GM12878 (cell line): ENCODE measurements at regions of chr3 and their contacts with region 1.

Region 1: DNA sequence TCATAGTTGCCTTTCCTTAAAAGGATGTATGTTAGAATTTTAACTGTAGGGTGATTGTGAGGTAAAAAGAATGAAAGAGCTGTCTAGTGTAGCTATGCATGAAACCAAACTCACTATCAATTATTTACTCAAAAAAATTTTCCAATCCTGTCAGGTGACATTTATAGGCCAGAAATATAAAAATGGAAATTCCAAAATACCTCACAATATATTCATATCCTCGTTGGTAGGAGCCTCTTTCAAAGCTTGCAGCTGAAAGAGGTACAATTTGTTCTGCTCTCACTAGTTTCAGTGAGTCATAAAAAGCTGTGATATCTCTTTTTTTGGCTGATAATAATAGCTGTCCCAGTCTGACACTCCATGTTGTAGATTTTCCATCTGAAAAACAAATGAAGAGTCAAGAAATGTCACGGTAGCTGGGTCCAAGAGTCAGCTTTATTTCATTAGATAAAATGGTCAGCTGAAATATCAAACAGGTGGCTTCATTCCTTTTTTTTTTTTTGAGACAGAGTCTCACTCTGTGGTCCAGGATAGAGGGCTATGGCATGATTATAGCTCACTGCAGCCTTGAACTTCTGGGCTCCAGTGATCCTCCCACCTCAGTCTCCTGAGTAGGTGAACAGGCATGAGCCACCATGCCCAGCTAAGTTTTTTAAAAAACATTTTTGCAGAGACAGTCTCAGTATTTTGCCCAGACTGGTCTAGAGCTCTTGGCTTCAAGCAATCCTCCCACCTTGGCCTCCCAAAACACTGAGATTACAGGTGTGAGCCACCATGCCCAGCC is 50.8 kb upstream of the XRN1 start:
- DNase-seq: no peak
- ATAC-seq: peak; percentile 84
- H3K4me3 ChIP-seq: no peak overlapping the region
- H3K27ac ChIP-seq: no peak overlapping the region
- H3K4me1 ChIP-seq: no peaks in the 10 kb centered on the region
- H3K27me3 ChIP-seq: no peaks in the 10 kb centered on the region
- CTCF ChIP-seq: no peak
- EP300 ChIP-seq: no peak
- POLR2A ChIP-seq: no peak
- RAD21 ChIP-seq: no peak

Region 2: DNA sequence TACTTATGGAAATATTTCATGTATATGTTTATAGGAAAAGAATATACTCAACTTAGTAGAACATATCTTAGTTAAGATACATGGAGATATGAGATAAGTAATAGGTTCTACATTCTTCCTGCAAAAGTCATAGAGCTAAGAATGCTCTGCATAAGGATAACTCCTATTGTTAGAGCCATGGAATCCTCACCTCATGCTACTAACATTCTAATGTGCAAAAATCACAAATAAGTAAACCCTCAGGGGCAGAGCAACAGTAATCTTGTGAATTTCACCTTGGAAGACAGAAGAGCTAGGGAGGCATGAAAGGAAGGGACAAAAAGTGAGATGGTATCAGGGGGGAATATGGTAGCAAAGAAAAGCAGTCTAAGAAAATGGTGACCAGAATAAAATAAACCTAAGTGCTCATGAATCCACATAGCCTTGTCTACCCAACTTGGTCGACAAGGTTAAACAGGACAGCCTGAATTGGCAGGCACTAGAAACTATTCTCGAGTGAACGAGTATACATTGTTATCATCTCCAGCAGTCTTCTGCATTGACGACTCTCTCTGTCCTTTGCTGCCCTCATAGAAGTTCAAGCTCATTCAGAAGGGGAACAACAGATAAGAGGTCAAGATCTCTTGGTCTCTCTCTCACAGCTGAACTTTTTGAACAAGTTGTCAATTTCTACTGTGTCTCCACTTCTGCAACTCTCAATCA is 103.5 kb before region 1 on chr3:
- CTCF ChIA-PET with region 1: no interaction called
- POLR2A ChIA-PET with region 1: no interaction called
- RAD21 ChIA-PET with region 1: no interaction called
- SMC1A ChIA-PET with region 1: no interaction called
- in situ Hi-C with region 1: no loop called
- intact Hi-C with region 1: no loop called
- DNase-seq: no peak
- ATAC-seq: no peak
- H3K4me3 ChIP-seq: no peak overlapping the region
- H3K27ac ChIP-seq: no peak overlapping the region
- H3K4me1 ChIP-seq: no peaks in the 10 kb centered on the region
- H3K27me3 ChIP-seq: no peaks in the 10 kb centered on the region
- CTCF ChIP-seq: no peak
- EP300 ChIP-seq: no peak
- POLR2A ChIP-seq: no peak
- RAD21 ChIP-seq: no peak

Region 3: GRCh38 chr3:142509079-142509478 is 10.5 kb after region 1 on chr3:
- CTCF ChIA-PET with region 1: interaction called, 4 read pairs
- POLR2A ChIA-PET with region 1: no interaction called
- RAD21 ChIA-PET with region 1: interaction called, 5 read pairs
- SMC1A ChIA-PET with region 1: interaction called, 14 read pairs
- in situ Hi-C with region 1: no loop called
- intact Hi-C with region 1: no loop called
- DNase-seq: no peak
- ATAC-seq: peak; percentile 55
- H3K4me3 ChIP-seq: no peak overlapping the region
- H3K27ac ChIP-seq: peak overlapping the region; percentile 4; the same call in 1 of the 2 replicates
- H3K4me1 ChIP-seq: no peaks in the 10 kb centered on the region
- H3K27me3 ChIP-seq: no peaks in the 10 kb centered on the region
- CTCF ChIP-seq: no peak
- EP300 ChIP-seq: no peak
- POLR2A ChIP-seq: no peak
- RAD21 ChIP-seq: no peak